BJ (cell line): ENCODE measurements at regions of chr14 and their contacts with region 1.

Region 1: DNA sequence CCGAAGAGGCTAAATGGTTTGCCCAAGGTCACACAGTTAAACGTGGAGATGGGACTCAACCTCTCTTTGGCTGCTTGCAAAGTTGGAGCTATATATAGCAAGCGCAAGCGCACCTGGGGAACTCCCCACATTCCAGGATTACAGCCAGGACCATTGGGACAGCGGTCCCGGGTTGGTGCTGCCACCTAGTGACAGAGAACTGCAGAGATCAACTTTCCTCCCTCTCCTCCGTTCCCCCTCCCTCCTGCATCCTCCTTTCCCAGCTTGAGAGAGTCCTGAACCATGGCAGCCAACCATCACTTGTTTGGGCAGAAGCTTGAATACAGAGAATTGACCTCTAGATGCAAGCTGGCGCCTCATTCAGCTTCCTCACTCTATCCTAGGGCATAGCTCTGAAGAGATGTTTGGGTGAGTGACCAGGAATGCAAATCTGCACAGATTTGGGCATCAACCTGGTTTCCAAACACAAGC is 17.4 kb upstream of the FLVCR2 start:
- DNase-seq: no peak
- H3K4me3 ChIP-seq: no peak overlapping the region
- H3K27me3 ChIP-seq: peaks cover 5% of the 10 kb centered on the region
- CTCF ChIP-seq: peak; percentile 90

Region 2: GRCh38 chr14:75176142-75176820 is 384.7 kb before region 1 on chr14 and contains the start of gene TMED10:
- CTCF ChIA-PET with region 1: no interaction called
- POLR2A ChIA-PET with region 1: no interaction called
- DNase-seq: no peak
- H3K4me3 ChIP-seq: peak within 1 kb of the TSS; percentile 93
- H3K27me3 ChIP-seq: no peaks in the 10 kb centered on the region
- CTCF ChIP-seq: no peak
- polyA plus RNA-seq, gene TMED10: 466 and 505 TPM in 2 replicates

Region 3: GRCh38 chr14:75476274-75476995 is 84.6 kb before region 1 on chr14:
- CTCF ChIA-PET with region 1: no interaction called
- POLR2A ChIA-PET with region 1: no interaction called
- DNase-seq: no peak
- H3K4me3 ChIP-seq: no peak overlapping the region
- H3K27me3 ChIP-seq: 0 out of 2 replicates have a peak, but pooled peaks cover 1% of the 10 kb centered on the region
- CTCF ChIP-seq: no peak

Region 4: GRCh38 chr14:75487155-75487671 is 73.8 kb before region 1 on chr14:
- CTCF ChIA-PET with region 1: interaction called, 14 read pairs
- POLR2A ChIA-PET with region 1: no interaction called
- DNase-seq: no peak
- H3K4me3 ChIP-seq: no peak overlapping the region
- H3K27me3 ChIP-seq: peaks cover 7% of the 10 kb centered on the region
- CTCF ChIP-seq: no peak

Region 5: DNA sequence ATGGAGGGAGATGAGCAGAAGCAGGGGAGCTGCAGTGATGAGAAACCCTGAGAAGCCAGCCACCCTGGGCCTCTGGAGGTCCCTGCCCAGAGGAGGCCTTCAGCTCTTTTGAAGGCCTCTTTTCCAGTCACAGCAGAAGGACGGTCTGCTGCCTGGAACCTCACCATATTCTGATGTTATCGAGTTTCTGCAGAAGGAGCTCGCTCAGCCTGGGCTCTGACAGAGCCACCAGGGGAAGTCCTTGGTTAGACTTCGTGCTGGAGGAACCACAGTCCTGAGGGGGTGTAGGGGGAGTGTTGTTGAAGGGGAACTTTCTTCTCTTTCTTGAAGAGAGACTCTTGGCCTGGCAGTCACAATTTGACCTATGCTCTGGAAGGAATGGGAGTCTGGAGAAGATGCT is 63.8 kb before region 1 on chr14:
- CTCF ChIA-PET with region 1: interaction called, 11 read pairs
- POLR2A ChIA-PET with region 1: no interaction called
- DNase-seq: no peak
- H3K4me3 ChIP-seq: no peak overlapping the region
- H3K27me3 ChIP-seq: peaks cover 1% of the 10 kb centered on the region; the same call in 1 of the 2 replicates
- CTCF ChIP-seq: no peak

Region 6: GRCh38 chr14:75597149-75597548 is 36.2 kb after region 1 on chr14:
- CTCF ChIA-PET with region 1: no interaction called
- POLR2A ChIA-PET with region 1: no interaction called
- DNase-seq: no peak
- H3K4me3 ChIP-seq: no peak overlapping the region
- H3K27me3 ChIP-seq: 0 out of 2 replicates have a peak, but pooled peaks cover 2% of the 10 kb centered on the region
- CTCF ChIP-seq: no peak

Region 7: DNA sequence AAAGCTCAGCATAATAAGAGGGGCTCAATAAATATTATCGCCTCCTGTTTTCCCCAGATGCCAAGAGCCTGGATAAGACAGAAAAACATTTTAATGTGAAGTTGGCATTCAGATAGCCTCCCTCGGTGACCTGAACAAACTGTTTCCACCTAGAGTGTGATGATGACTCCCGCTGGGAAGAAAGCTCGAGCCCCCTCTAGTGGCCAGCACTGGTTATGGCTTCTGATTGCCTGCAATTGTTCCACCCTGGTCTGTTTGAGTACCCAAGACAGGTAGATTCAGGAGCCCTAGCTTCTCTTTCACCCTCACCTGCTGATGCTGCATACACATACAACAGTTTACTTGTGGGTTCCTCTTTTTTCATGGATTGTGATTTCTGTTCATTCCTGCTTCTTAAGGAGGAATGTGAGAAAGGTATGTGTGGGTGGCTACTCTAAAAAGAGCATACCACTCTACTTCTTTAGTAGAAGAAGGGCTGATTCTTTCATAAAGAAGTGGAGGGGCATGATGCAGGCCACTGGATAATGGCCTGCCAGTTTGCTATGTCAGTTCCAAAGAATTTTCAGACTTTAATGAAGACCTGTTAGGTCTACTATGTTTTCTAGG is 93.2 kb after region 1 on chr14:
- CTCF ChIA-PET with region 1: interaction called, 15 read pairs
- POLR2A ChIA-PET with region 1: no interaction called
- DNase-seq: no peak
- H3K4me3 ChIP-seq: no peak overlapping the region
- H3K27me3 ChIP-seq: no peaks in the 10 kb centered on the region
- CTCF ChIP-seq: peak; percentile 95